ENCODE measurements at regions of chr5 and their contacts with region 1.

Region 1: GRCh38 chr5:154754460-154755360 is 467 bp upstream of the LARP1 start:
- DNase-seq: peak; percentile 100
- ATAC-seq: peak; percentile 87 to 92 (median 88)
- H3K4me3 ChIP-seq: peak overlapping the region; percentile 99
- H3K27ac ChIP-seq: peak overlapping the region; percentile 99
- H3K4me1 ChIP-seq: peaks cover 35% of the 10 kb centered on the region
- H3K27me3 ChIP-seq: no peaks in the 10 kb centered on the region
- CTCF ChIP-seq: peak; percentile 27

Region 2: GRCh38 chr5:154683101-154683880 is 71.4 kb before region 1 on chr5:
- intact Hi-C with region 1: loop called (anchors 1 to 5 kb)
- DNase-seq: no peak
- ATAC-seq: peak in 2 of 4 donors; percentile 27 to 33
- H3K4me3 ChIP-seq: peak overlapping the region; percentile 75
- H3K27ac ChIP-seq: peak overlapping the region; percentile 93
- H3K4me1 ChIP-seq: peaks cover 9% of the 10 kb centered on the region
- H3K27me3 ChIP-seq: no peaks in the 10 kb centered on the region
- CTCF ChIP-seq: no peak

Region 3: DNA sequence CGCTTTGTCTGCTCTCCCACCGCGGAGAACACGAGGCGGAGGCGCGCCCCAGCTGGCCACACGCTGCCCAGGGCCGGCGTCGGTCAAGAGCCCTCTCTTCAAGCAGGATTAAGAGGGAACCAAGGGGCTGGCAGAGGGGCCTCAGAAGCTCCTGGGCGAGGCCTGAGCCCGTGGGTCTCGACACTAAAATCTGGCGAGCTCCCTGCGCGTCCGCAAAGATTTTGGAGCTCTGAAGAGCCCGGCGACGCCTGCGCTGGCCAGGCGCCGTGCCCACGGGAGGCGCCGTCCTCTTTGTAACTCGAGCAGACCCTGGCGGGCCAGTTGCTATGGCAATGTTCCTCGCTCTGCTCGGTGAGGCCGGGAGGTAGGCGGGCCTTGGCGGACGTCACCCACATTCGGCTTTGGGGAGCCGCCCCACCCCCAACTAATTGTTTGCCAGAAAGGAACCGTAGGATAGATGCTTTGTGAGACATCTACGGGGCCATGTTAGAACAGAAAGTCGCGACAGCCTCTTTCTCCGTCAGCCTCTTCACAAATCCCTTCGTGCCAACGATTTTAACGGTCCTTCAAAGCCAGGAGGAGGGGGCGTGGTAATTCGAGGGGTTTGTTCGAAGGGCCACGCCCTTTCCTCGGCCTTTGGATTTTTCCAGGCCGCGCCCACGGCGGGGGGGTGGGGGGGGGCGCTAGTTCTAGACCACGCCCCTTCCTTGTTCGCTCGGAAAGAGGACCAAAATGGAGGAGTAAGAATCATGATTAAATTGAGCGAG is 103.0 kb after region 1 on chr5:
- intact Hi-C with region 1: loop called (anchors 5 kb)
- DNase-seq: peak; percentile 96 to 98
- ATAC-seq: peak; percentile 84 to 89 (median 86)
- H3K4me3 ChIP-seq: peak overlapping the region; percentile 76
- H3K27ac ChIP-seq: peak overlapping the region; percentile 98
- H3K4me1 ChIP-seq: peaks cover 27% of the 10 kb centered on the region
- H3K27me3 ChIP-seq: no peaks in the 10 kb centered on the region
- CTCF ChIP-seq: peak; percentile 24

Region 4: DNA sequence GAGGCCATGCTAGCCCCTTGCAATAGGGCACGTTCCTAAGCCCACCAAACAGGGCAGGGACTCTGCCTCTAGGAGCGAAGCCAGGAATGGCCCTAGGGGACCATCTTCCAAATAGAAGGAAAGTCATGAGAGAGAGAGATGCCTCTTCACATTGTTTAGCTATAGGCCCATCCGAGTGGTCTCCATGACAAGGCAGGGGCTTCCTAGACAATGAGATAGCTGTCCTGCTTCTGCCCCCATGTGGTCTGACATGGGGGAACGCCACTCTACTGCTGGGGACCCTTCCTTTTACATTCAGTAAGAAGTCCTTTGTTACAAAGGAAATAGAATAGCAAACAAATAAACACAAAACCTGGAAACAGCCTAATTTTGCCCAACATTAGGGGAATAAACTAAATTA is 241.0 kb after region 1 on chr5:
- intact Hi-C with region 1: no loop called
- DNase-seq: no peak
- ATAC-seq: no peak
- H3K4me3 ChIP-seq: no peak overlapping the region
- H3K27ac ChIP-seq: no peak overlapping the region
- H3K4me1 ChIP-seq: no peaks in the 10 kb centered on the region
- H3K27me3 ChIP-seq: no peaks in the 10 kb centered on the region
- CTCF ChIP-seq: no peak

Region 5: DNA sequence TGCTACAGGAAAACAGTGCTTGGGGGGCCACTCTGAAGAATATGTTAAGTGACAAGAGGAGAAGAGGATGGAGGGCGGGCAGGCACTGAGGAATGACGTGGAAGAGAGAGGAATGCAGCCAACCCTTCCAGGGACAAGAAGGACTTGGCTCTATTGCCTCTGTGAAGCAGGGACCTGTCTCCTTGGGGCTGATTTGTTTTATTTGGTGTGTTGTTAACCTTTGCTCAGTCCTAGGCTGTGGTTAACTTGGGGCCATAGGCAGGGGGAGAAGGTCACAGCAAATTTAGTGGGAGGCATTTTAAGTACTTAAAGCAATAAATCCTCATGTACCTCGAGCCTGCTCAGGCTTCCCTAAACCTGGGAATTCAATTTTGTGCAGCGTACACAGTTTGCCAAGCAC is 298.8 kb after region 1 on chr5:
- intact Hi-C with region 1: no loop called
- DNase-seq: no peak
- ATAC-seq: no peak
- H3K4me3 ChIP-seq: no peak overlapping the region
- H3K27ac ChIP-seq: no peak overlapping the region
- H3K4me1 ChIP-seq: no peaks in the 10 kb centered on the region
- H3K27me3 ChIP-seq: no peaks in the 10 kb centered on the region
- CTCF ChIP-seq: no peak

Measured in psoas muscle (tissue), 8 donors.